Activated CD4-positive, alpha-beta T cell treated with anti-CD3 and anti-CD28 coated beads for 36 hours (primary cell): ENCODE measurements at regions of chr14 and their contacts with region 1.

Region 1: GRCh38 chr14:92680781-92681650 is 67.4 kb downstream of the LGMN start:
- DNase-seq: peak; percentile 87
- ATAC-seq: peak; percentile 37
- H3K4me3 Mint-ChIP-seq: no peak overlapping the region
- H3K27ac Mint-ChIP-seq: peak overlapping the region; percentile 33
- H3K4me1 Mint-ChIP-seq: peaks cover 28% of the 10 kb centered on the region
- H3K27me3 Mint-ChIP-seq: no peaks in the 10 kb centered on the region

Region 2: GRCh38 chr14:92121670-92122350 is 559.2 kb before region 1 on chr14 and contains the starts of genes CPSF2 and NDUFB1:
- CTCF ChIA-PET with region 1: interaction called, 4 read pairs
- POLR2A ChIA-PET with region 1: no interaction called
- intact Hi-C with region 1: loop called in 1 of 2 experiments (anchors 5 kb)
- DNase-seq: peak; percentile 90
- ATAC-seq: peak; percentile 92
- H3K4me3 Mint-ChIP-seq: peak within 1 kb of the TSS; percentile 77
- H3K27ac Mint-ChIP-seq: peak within 1 kb of the TSS; percentile 100
- H3K4me1 Mint-ChIP-seq: peaks cover 34% of the 10 kb centered on the region
- H3K27me3 Mint-ChIP-seq: no peaks in the 10 kb centered on the region
- total RNA-seq, gene CPSF2: 102 to 117 TPM
- total RNA-seq, gene NDUFB1: 68.9 to 118 TPM

Region 3: GRCh38 chr14:92352158-92352985 is 328.6 kb before region 1 on chr14:
- CTCF ChIA-PET with region 1: no interaction called
- POLR2A ChIA-PET with region 1: no interaction called
- intact Hi-C with region 1: loop called in 1 of 2 experiments (anchors 5 kb)
- DNase-seq: peak; percentile 73
- ATAC-seq: peak; percentile 49
- H3K4me3 Mint-ChIP-seq: no peak overlapping the region
- H3K27ac Mint-ChIP-seq: no peak overlapping the region
- H3K4me1 Mint-ChIP-seq: no peaks in the 10 kb centered on the region
- H3K27me3 Mint-ChIP-seq: peaks cover 18% of the 10 kb centered on the region

Region 4: GRCh38 chr14:92556255-92556741 is 124.7 kb before region 1 on chr14:
- CTCF ChIA-PET with region 1: interaction called, 3 read pairs
- POLR2A ChIA-PET with region 1: no interaction called
- intact Hi-C with region 1: loop called (anchors 2 to 5 kb)
- DNase-seq: no peak
- ATAC-seq: peak; percentile 64
- H3K4me3 Mint-ChIP-seq: no peak overlapping the region
- H3K27ac Mint-ChIP-seq: peak overlapping the region; percentile 55
- H3K4me1 Mint-ChIP-seq: peaks cover 58% of the 10 kb centered on the region
- H3K27me3 Mint-ChIP-seq: no peaks in the 10 kb centered on the region

Region 5: DNA sequence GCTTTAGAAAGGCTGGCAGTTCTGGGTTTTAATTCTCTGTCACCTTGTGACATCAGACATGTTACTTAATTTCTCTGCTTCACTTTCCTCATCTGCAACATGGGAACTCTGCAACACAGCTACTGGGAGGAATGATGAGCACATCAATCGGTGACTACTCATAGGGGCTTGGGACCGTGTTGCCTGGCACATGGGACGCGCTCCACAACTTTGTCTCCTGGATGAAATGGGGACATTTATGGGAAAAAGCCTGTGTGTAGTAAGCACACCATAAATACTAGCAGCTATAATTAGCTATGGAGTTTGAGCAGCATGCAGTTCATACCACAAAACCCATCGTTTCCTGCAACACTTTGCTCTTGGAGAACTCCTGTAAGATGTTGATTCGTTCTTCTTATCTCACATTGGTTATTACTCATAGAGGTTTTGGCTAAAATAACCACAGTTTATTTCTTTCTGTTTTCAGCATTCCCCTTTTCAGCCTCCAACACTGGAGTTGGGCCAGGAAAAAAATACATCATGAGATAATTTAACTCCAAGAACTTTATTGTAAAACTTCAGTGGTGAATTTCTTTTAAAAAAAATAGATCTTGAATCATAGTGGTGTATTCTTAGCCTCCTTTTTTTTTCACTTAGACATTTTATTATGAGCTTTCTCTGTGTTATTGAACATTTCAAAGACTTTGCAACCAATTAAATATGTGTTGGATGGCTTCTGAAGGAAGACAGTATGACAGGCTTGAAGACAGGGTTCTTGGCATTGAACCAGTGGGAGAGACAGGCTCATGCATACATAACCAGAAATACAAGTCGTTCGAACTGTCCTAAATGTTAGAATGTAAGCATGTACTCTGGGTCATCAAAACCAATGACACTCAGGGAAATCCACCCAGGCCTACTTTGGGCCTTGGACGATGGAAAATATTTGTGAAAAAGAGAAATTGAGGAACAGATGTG is 94.8 kb before region 1 on chr14:
- CTCF ChIA-PET with region 1: interaction called, 7 read pairs
- POLR2A ChIA-PET with region 1: interaction called, 4 read pairs
- intact Hi-C with region 1: loop called (anchors 1 kb)
- DNase-seq: peak; percentile 43
- ATAC-seq: peak; percentile 79
- H3K4me3 Mint-ChIP-seq: no peak overlapping the region
- H3K27ac Mint-ChIP-seq: peak overlapping the region; percentile 68
- H3K4me1 Mint-ChIP-seq: peaks cover 85% of the 10 kb centered on the region
- H3K27me3 Mint-ChIP-seq: peaks cover 2% of the 10 kb centered on the region

Region 6: GRCh38 chr14:92651106-92651757 is 29.8 kb before region 1 on chr14:
- CTCF ChIA-PET with region 1: interaction called, 4 read pairs
- POLR2A ChIA-PET with region 1: interaction called, 3 read pairs
- intact Hi-C with region 1: loop called (anchors 1 kb)
- DNase-seq: peak; percentile 90
- ATAC-seq: peak; percentile 82
- H3K4me3 Mint-ChIP-seq: peak overlapping the region; percentile 90
- H3K27ac Mint-ChIP-seq: peak overlapping the region; percentile 96
- H3K4me1 Mint-ChIP-seq: peaks cover 75% of the 10 kb centered on the region
- H3K27me3 Mint-ChIP-seq: no peaks in the 10 kb centered on the region